IMR-90 (cell line): ENCODE measurements at regions of chr6 and their contacts with region 1.

Region 1: GRCh38 chr6:624979-625378 is 31.9 kb downstream of the HUS1B start:
- DNase-seq: peak; percentile 51
- ATAC-seq: peak; percentile 80
- H3K4me3 ChIP-seq: no peak overlapping the region
- H3K27ac ChIP-seq: no peak overlapping the region
- H3K4me1 ChIP-seq: peaks cover 3% of the 10 kb centered on the region; the same call in 1 of the 2 replicates
- H3K27me3 ChIP-seq: no peaks in the 10 kb centered on the region
- CTCF ChIP-seq: peak; percentile 43
- POLR2A ChIP-seq: no peak
- RAD21 ChIP-seq: peak; percentile 53

Region 2: DNA sequence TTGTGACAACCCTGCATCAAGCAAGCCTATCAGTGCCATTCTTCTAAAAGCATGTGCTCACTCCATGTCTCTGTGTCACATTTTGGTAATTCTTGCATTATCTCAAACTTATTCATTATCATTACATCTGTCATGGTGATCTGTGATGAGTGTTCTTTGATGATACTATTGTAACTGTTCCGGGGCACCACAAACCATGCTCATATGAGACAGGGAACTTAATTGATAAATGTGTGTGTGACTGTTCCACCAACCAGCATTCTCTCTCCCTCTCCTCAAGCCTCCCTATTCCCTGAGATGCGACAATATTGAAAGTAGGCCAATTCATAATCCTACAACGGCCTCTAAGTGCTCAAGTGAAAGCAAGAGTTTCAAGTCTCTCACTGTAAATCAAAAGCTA is 27.9 kb after region 1 on chr6:
- CTCF ChIA-PET with region 1: no interaction called
- POLR2A ChIA-PET with region 1: no interaction called
- dilution Hi-C with region 1: no loop called
- in situ Hi-C with region 1: no loop called
- intact Hi-C with region 1: loop called (anchors 1 kb)
- DNase-seq: no peak
- ATAC-seq: no peak
- H3K4me3 ChIP-seq: no peak overlapping the region
- H3K27ac ChIP-seq: no peak overlapping the region
- H3K4me1 ChIP-seq: peaks cover 3% of the 10 kb centered on the region
- H3K27me3 ChIP-seq: no peaks in the 10 kb centered on the region
- CTCF ChIP-seq: no peak
- POLR2A ChIP-seq: no peak
- RAD21 ChIP-seq: no peak

Region 3: DNA sequence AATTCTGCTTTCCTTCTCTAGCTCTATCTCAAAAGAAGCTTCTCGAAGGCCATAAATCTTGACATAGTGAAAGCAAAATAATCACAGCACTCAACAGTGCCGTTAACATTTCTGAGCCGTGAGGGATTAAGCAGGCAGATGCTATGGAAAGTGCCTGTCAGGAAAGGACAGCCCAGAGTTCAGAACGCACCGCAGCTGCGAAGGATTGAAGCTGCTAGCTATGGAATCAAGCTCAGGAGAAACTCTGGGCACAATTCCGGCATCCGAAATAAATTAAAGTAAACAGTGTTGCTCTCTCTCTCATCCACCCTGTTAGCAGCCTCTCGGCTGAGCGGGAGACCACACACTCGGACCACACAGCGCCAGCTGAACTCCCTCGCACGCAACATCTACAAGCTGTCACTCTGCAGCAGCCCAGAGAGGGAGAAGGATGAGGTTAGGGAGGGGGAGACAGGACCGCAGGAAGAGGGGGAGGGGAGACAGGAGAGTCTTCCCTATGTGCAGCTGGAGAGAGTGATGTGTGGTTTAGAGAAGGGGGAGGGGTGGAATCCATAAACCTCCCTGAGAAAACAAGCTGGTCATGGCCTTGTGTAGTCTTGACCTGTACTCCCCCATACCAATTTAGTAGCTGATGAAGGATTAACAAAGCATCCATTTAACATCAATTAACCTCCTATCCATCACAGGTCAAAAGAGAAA is 58.9 kb after region 1 on chr6:
- CTCF ChIA-PET with region 1: no interaction called
- POLR2A ChIA-PET with region 1: no interaction called
- dilution Hi-C with region 1: no loop called
- in situ Hi-C with region 1: no loop called
- intact Hi-C with region 1: loop called (anchors 5 kb)
- DNase-seq: peak; percentile 88
- ATAC-seq: peak; percentile 73
- H3K4me3 ChIP-seq: peak overlapping the region; percentile 7
- H3K27ac ChIP-seq: peak overlapping the region; percentile 3; the same call in 1 of the 2 replicates
- H3K4me1 ChIP-seq: peaks cover 17% of the 10 kb centered on the region
- H3K27me3 ChIP-seq: no peaks in the 10 kb centered on the region
- CTCF ChIP-seq: no peak
- POLR2A ChIP-seq: no peak; the same call in 1 of the 2 replicates
- RAD21 ChIP-seq: no peak

Region 4: DNA sequence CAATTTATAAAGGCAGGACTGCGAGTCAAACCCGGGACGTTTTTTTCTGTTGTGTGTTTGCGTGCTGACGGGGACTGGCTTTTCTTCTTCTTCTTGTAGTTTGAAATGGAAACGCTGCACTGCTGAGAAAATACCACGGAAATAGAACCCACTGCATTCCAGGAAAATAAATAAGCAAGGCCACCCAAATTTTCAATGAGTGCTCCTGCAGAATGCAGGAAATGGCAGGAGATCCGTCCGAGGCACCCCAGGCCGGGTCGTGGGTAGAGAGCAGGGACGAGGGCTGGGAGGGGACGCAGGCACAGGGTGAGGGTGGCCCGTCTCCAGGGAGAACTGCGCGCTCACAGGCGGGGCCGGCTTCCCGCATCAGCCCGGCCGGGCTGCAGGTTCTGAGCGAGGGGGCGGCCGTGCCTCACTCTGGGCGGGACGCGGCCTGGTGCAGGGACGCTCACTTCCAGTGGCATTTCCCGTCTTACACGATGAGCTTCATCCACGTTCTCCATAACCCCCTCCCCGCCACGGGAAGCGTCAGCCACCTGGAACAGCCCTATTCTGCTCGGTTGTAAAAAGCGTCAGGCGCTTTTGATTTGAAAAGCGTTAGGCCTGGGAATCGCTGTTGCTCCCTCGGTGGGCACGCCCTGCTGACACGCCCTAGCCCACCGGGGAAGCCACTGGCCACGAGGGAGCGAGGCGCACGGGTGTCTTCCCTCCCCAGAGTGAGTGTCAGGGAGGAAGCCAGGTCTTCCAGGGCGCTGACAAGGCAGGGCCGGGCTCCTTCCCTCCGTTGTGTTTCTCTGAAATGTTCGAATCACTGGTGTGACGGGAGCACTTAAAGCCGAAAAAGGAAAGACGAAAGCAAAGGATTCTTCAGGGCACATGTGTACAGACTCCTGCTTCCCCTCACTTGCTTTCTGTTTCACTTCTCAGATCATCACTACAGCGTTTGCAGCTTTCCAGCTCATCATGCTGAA is 85.9 kb after region 1 on chr6:
- CTCF ChIA-PET with region 1: no interaction called
- POLR2A ChIA-PET with region 1: no interaction called
- dilution Hi-C with region 1: no loop called
- in situ Hi-C with region 1: no loop called
- intact Hi-C with region 1: loop called (anchors 5 kb)
- DNase-seq: peak; percentile 79
- ATAC-seq: peak; percentile 87
- H3K4me3 ChIP-seq: peak overlapping the region; percentile 62
- H3K27ac ChIP-seq: peak overlapping the region; percentile 94
- H3K4me1 ChIP-seq: 0 out of 2 replicates have a peak, but pooled peaks cover 5% of the 10 kb centered on the region
- H3K27me3 ChIP-seq: no peaks in the 10 kb centered on the region
- CTCF ChIP-seq: no peak
- POLR2A ChIP-seq: peak; percentile 32; the same call in 1 of the 2 replicates
- RAD21 ChIP-seq: no peak

Region 5: DNA sequence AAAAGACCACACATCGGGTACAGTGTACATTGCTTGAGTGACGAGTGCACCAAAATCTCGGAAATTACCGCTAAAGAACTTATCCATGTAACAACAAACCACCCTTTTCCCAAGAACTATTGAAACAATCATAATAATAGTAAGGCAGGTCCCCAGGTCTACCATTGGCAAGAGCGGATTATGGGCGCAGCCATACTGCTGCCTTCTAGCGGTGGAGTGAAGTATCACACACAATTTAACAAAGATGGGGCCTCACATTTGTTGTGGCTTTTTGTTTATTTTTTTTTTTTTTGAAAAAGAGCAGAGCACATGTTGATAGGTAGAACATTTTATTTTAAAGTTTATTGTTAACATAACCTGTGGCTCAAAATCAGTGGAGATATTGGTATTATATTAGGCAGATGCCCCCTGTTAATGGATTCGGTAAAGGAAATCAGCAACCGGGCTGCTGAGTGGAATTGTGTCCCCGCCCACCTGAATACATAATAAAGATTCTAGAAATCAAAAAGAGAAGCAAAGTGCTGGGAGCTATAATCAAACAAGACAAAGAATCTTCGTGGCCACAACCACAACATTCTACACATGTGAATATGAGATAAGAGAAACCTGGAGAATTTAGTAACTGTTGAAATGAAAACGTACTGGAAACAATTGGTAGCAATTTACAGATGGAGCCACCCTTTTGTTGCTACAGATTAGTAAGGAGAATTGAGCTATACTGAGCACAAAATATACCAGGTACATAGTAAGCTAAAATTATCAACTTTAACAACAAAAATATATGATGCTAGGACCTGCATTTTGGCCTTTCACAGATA is 162.2 kb after region 1 on chr6:
- CTCF ChIA-PET with region 1: no interaction called
- POLR2A ChIA-PET with region 1: no interaction called
- dilution Hi-C with region 1: no loop called
- in situ Hi-C with region 1: no loop called
- intact Hi-C with region 1: loop called (anchors 10 kb)
- DNase-seq: peak; percentile 3
- ATAC-seq: no peak
- H3K4me3 ChIP-seq: no peak overlapping the region
- H3K27ac ChIP-seq: no peak overlapping the region
- H3K4me1 ChIP-seq: no peaks in the 10 kb centered on the region
- H3K27me3 ChIP-seq: peaks cover 3% of the 10 kb centered on the region; the same call in 1 of the 2 replicates
- CTCF ChIP-seq: peak; percentile 44
- POLR2A ChIP-seq: no peak
- RAD21 ChIP-seq: peak; percentile 44

Region 6: DNA sequence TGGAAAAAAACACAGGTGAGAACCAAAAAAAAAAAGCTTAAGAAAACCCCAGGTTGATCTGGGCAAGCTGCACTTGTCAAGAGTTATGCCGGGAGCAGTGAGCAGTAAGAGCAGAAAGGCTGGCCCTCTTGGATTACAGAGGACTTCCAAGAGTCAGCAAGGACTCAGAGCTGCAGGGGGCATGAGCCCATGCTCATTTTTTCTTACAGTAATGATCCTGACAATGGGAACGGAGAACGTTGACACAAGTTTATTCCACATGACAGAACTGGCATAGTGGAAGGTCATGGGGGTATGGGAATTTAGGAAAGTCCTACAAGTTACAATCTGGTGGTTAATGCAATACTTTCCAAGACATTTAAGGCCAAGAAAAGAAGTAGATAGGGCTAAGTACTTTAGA is 1363.9 kb after region 1 on chr6:
- CTCF ChIA-PET with region 1: no interaction called
- POLR2A ChIA-PET with region 1: interaction called, 16 read pairs
- dilution Hi-C with region 1: no loop called
- in situ Hi-C with region 1: no loop called
- intact Hi-C with region 1: no loop called
- DNase-seq: no peak
- ATAC-seq: no peak
- H3K4me3 ChIP-seq: no peak overlapping the region
- H3K27ac ChIP-seq: no peak overlapping the region
- H3K4me1 ChIP-seq: peaks cover 14% of the 10 kb centered on the region
- H3K27me3 ChIP-seq: no peaks in the 10 kb centered on the region
- CTCF ChIP-seq: no peak
- POLR2A ChIP-seq: no peak
- RAD21 ChIP-seq: no peak